AG04449 (cell line): ENCODE measurements at regions of chr6 and their contacts with region 1.

Region 1: DNA sequence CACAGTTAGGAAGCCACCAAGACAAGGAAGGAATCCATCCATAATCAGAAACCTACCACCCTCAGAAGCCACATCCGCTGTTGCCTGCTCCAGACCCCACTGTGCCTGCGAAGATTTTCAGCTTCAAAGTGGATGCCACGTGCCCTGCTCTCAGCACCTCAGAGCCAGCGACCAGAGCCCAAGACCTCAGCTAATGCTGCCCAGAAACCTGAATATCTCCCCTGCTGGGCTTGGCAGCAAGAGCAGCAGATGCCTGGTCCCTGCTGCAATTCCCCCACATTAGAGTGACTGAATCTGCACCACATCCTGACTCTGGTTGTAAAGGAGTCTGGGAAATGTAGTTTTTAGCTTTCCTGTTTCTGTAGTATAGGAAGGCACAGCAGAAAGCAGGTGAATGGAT is 10.7 kb upstream of the ULBP3 start:
- DNase-seq: no peak
- H3K4me3 ChIP-seq: no peak overlapping the region
- CTCF ChIP-seq: no peak

Region 2: GRCh38 chr6:149918151-149918905 is 161.3 kb before region 1 on chr6:
- CTCF ChIA-PET with region 1: no interaction called
- POLR2A ChIA-PET with region 1: no interaction called
- DNase-seq: no peak
- H3K4me3 ChIP-seq: no peak overlapping the region
- CTCF ChIP-seq: no peak

Region 3: GRCh38 chr6:150091476-150091875 is 11.9 kb after region 1 on chr6:
- CTCF ChIA-PET with region 1: interaction called, 52 read pairs
- POLR2A ChIA-PET with region 1: no interaction called
- DNase-seq: no peak
- H3K4me3 ChIP-seq: no peak overlapping the region
- CTCF ChIP-seq: no peak

Region 4: DNA sequence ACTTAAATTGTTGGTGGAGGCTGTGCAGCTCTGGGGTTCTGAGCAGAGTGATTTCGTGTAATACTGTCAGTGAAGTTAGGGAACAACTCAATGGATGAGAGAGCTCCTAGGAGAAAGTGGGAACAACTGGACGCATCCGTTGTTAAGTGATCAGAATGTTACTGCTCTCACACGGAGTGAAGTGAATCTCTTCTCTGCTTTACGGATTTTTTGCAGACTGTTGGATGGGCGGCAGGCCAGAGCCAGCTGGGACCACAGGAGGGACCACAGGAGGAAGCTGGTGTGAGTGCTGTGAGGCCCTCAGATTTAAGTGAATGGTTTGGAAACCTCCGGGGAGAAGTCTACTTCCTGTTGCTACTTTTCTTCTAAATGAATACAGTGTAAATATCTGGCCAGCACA is 39.6 kb after region 1 on chr6:
- CTCF ChIA-PET with region 1: interaction called, 13 read pairs
- POLR2A ChIA-PET with region 1: no interaction called
- DNase-seq: no peak
- H3K4me3 ChIP-seq: no peak overlapping the region
- CTCF ChIP-seq: no peak

Region 5: GRCh38 chr6:150267686-150268561 is 188.3 kb after region 1 on chr6:
- CTCF ChIA-PET with region 1: interaction called, 11 read pairs
- POLR2A ChIA-PET with region 1: no interaction called
- DNase-seq: no peak
- H3K4me3 ChIP-seq: no peak overlapping the region
- CTCF ChIP-seq: no peak

Region 6: GRCh38 chr6:150334790-150335783 is 255.5 kb after region 1 on chr6:
- CTCF ChIA-PET with region 1: interaction called, 64 read pairs
- POLR2A ChIA-PET with region 1: no interaction called
- DNase-seq: peak; percentile 46
- H3K4me3 ChIP-seq: no peak overlapping the region
- CTCF ChIP-seq: peak; percentile 71

Region 7: DNA sequence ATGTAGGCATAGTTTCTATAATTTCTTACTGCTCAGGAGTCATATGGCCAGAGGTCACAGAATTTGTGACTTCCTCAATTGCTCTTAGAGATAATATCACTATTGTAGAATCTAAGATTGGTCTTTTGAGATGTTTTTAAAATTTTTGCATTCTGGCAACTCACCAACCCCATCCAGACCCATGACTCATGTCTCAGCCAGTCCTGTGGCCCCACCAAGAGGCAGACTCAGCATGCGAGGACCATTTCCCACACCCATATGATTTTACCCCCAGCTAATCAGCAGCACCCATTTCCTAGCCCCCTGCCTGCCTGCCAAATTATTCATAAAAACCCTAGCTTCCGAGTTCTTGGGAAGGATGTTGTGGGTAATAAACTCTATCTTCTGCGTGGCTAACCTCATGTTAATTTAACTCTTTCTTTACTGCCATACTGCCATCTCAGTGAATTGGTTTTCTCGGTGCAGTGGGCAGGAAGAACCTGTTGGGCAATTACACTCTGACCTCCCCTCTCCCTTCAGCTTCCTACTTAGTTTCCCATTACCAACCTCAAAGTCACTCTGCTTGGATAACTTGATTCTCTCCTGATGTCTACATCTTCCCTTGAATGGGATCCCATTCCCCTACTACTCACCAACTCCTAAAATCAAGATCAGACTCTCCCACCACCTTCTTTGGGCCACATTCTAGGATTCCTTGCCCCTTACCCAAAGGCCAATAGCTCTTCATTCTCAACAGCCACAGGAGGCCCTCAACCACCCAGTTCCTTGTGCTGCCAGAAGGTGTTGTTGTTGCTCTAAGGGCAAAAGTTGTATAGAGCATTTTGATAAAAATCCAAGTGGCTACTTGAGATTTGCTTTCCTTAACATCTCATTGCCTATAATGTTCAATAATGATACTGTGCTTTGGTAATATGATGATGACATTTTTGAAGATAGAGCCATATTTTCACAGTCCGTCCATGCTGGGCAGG is 273.0 kb after region 1 on chr6:
- CTCF ChIA-PET with region 1: interaction called, 24 read pairs
- POLR2A ChIA-PET with region 1: no interaction called
- DNase-seq: peak; percentile 41
- H3K4me3 ChIP-seq: no peak overlapping the region
- CTCF ChIP-seq: peak; percentile 11

Region 8: GRCh38 chr6:150377211-150377781 is 297.7 kb after region 1 on chr6:
- CTCF ChIA-PET with region 1: interaction called, 11 read pairs
- POLR2A ChIA-PET with region 1: no interaction called
- DNase-seq: no peak
- H3K4me3 ChIP-seq: no peak overlapping the region
- CTCF ChIP-seq: no peak